ENCODE measurements at regions of chr22 and their contacts with region 1.

Region 1: DNA sequence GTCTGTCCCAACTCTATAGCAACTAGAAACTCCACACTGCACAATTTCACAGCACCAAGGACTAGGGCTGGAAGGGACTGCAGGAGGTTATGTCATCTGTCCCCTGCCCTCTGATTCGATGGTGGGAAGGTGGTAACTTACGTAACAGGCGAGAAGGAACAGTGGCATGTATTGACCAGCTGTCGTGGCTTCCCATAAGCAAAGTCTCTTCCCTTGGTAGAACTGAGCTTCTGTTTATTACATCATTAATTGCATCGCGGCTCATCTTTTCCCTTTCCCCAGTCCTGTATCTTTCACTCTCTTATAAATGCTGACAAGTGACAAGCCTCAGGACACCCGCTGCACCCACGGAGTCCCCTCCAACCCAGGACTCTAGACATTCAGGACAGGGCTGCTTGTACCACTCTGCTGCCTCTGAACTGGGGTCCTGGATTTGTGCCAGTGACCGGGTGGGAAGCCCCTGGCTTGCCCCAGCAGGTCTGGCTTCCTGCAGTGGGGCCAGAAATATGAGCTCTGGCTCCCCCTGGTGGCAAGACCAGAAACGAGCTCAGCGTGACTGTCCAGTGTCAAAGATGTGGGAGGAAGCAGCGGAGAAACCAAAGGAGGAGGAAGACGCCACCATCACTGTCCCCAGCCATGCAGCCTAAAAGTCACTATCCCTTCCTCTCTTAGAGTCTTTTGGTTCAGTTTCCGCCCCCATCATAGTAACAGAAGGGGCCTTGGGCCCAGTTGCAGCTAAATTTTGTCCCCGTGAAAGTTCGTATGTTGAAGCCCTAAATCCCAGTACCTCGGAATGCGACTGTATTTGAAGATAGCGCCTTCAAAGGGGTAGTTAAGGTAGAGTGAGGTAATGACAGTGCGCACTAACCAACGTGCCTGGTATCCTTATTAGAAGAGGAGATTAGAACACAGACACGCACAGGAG is 84.5 kb downstream of the ISX start:
- DNase-seq: peak; percentile 54
- ATAC-seq: peak; percentile 40; the same call in 1 of the 2 replicates
- H3K4me3 ChIP-seq: no peak overlapping the region
- H3K27ac ChIP-seq: no peak overlapping the region
- H3K4me1 ChIP-seq: no peaks in the 10 kb centered on the region
- H3K27me3 ChIP-seq: no peaks in the 10 kb centered on the region
- CTCF ChIP-seq: peak; percentile 77

Region 2: GRCh38 chr22:35114131-35114980 is 36.1 kb before region 1 on chr22:
- CTCF ChIA-PET with region 1: no interaction called
- POLR2A ChIA-PET with region 1: no interaction called
- intact Hi-C with region 1: no loop called
- DNase-seq: no peak
- ATAC-seq: no peak
- H3K4me3 ChIP-seq: no peak overlapping the region
- H3K27ac ChIP-seq: no peak overlapping the region
- H3K4me1 ChIP-seq: no peaks in the 10 kb centered on the region
- H3K27me3 ChIP-seq: no peaks in the 10 kb centered on the region
- CTCF ChIP-seq: no peak

Region 3: DNA sequence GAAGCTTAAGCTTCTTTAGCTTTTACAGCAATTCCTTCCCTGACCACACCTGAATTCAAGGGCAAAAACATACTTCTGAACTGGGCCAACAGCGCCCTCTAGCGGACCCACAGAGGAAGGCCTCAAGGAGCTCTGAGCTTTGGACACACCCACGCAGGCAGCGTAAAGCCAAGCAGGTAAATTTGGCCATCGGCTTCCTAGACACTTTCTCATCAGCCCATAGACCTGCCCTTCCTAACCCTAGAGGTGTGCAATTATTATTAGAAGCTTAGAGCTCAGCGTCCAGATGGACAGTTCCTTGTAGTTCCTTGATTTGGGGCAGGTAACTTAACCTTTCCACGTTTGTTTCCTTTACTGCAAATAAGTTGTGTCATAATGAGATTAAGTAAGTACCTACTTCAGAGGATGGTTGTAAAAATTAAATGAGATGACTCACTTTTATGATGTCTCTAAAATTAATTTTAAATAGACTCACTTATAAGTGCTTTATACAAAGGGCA is 81.2 kb after region 1 on chr22:
- CTCF ChIA-PET with region 1: interaction called, 14 read pairs
- POLR2A ChIA-PET with region 1: no interaction called
- intact Hi-C with region 1: loop called (anchors 5 kb)
- DNase-seq: peak; percentile 79
- ATAC-seq: peak; percentile 88
- H3K4me3 ChIP-seq: no peak overlapping the region
- H3K27ac ChIP-seq: no peak overlapping the region
- H3K4me1 ChIP-seq: 0 out of 2 replicates have a peak, but pooled peaks cover 5% of the 10 kb centered on the region
- H3K27me3 ChIP-seq: no peaks in the 10 kb centered on the region
- CTCF ChIP-seq: peak; percentile 93

Region 4: GRCh38 chr22:35257321-35258190 is 107.1 kb after region 1 on chr22 and contains the start of gene HMGXB4:
- CTCF ChIA-PET with region 1: no interaction called
- POLR2A ChIA-PET with region 1: no interaction called
- intact Hi-C with region 1: no loop called
- DNase-seq: peak; percentile 78
- ATAC-seq: peak; percentile 87
- H3K4me3 ChIP-seq: peak within 1 kb of the TSS; percentile 97
- H3K27ac ChIP-seq: peak within 1 kb of the TSS; percentile 60
- H3K4me1 ChIP-seq: peaks cover 14% of the 10 kb centered on the region; the same call in 1 of the 2 replicates
- H3K27me3 ChIP-seq: no peaks in the 10 kb centered on the region
- CTCF ChIP-seq: no peak
- total RNA-seq, gene HMGXB4: 12.9 and 18.1 TPM in 2 replicates

Measured in PC-3 (cell line).